ENCODE measurements at regions of chr7 and their contacts with region 1.

Region 1: GRCh38 chr7:94395141-94396036 is 694 bp downstream of the COL1A2 start:
- DNase-seq: peak; percentile 77
- ATAC-seq: peak; percentile 79
- H3K4me3 ChIP-seq: peak overlapping the region in 3 of 5 experiments; percentile 40 to 66 (median 50)
- H3K4me3 Mint-ChIP-seq: peak overlapping the region; percentile 75
- H3K27ac ChIP-seq: no peak overlapping the region
- H3K27ac Mint-ChIP-seq: no peak overlapping the region
- H3K4me1 ChIP-seq: peaks cover 15 to 16% of the 10 kb centered on the region in 2 donors
- H3K4me1 Mint-ChIP-seq: peaks cover 10% of the 10 kb centered on the region
- H3K27me3 ChIP-seq: peaks cover 0 to 29% (median 8%) of the 10 kb centered on the region in 4 experiments
- H3K27me3 Mint-ChIP-seq: peaks cover 37% of the 10 kb centered on the region
- CTCF ChIP-seq: peak; percentile 86

Region 2: GRCh38 chr7:93442478-93443224 is 952.7 kb before region 1 on chr7:
- CTCF ChIA-PET with region 1: interaction called, 10 read pairs
- POLR2A ChIA-PET with region 1: no interaction called
- intact Hi-C with region 1: loop called (anchors 5 kb)
- DNase-seq: peak; percentile 56
- ATAC-seq: peak; percentile 47
- H3K4me3 ChIP-seq: no peak overlapping the region
- H3K4me3 Mint-ChIP-seq: no peak overlapping the region
- H3K27ac ChIP-seq: no peak overlapping the region
- H3K27ac Mint-ChIP-seq: no peak overlapping the region
- H3K4me1 ChIP-seq: no peaks in the 10 kb centered on the region
- H3K4me1 Mint-ChIP-seq: no peaks in the 10 kb centered on the region
- H3K27me3 ChIP-seq: no peaks in the 10 kb centered on the region
- H3K27me3 Mint-ChIP-seq: peaks cover 6% of the 10 kb centered on the region
- CTCF ChIP-seq: peak; percentile 79

Region 3: GRCh38 chr7:93799750-93800357 is 595.5 kb before region 1 on chr7:
- CTCF ChIA-PET with region 1: interaction called, 4 read pairs
- POLR2A ChIA-PET with region 1: no interaction called
- intact Hi-C with region 1: loop called (anchors 5 kb)
- DNase-seq: peak; percentile 6
- ATAC-seq: no peak
- H3K4me3 ChIP-seq: no peak overlapping the region
- H3K4me3 Mint-ChIP-seq: no peak overlapping the region
- H3K27ac ChIP-seq: no peak overlapping the region
- H3K27ac Mint-ChIP-seq: no peak overlapping the region
- H3K4me1 ChIP-seq: no peaks in the 10 kb centered on the region
- H3K4me1 Mint-ChIP-seq: no peaks in the 10 kb centered on the region
- H3K27me3 ChIP-seq: no peaks in the 10 kb centered on the region
- H3K27me3 Mint-ChIP-seq: no peaks in the 10 kb centered on the region
- CTCF ChIP-seq: no peak

Region 4: DNA sequence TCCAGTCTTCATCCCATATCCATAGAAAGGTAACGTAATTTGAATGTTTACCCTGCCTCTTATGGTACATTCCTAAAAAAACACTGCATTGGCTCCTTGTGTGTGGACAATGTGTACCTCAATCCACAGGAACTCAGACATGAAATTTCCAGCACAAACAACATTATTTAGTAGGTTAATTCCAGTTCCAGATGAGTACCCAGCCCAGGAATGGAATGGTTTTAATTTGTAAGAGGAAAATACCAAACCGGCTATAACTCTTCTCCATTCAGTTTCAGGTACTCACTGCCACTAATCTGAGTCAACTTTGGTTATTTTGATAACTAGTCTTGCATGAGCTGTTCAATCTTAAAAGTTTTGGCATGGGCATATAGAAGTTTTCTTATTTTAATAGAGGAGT is 543.9 kb before region 1 on chr7:
- CTCF ChIA-PET with region 1: no interaction called
- POLR2A ChIA-PET with region 1: no interaction called
- intact Hi-C with region 1: no loop called
- DNase-seq: no peak
- ATAC-seq: no peak
- H3K4me3 ChIP-seq: no peak overlapping the region
- H3K4me3 Mint-ChIP-seq: no peak overlapping the region
- H3K27ac ChIP-seq: no peak overlapping the region
- H3K27ac Mint-ChIP-seq: no peak overlapping the region
- H3K4me1 ChIP-seq: no peaks in the 10 kb centered on the region
- H3K4me1 Mint-ChIP-seq: no peaks in the 10 kb centered on the region
- H3K27me3 ChIP-seq: peaks cover 0 to 3% (median 0%) of the 10 kb centered on the region in 4 experiments
- H3K27me3 Mint-ChIP-seq: peaks cover 29% of the 10 kb centered on the region
- CTCF ChIP-seq: no peak

Region 5: DNA sequence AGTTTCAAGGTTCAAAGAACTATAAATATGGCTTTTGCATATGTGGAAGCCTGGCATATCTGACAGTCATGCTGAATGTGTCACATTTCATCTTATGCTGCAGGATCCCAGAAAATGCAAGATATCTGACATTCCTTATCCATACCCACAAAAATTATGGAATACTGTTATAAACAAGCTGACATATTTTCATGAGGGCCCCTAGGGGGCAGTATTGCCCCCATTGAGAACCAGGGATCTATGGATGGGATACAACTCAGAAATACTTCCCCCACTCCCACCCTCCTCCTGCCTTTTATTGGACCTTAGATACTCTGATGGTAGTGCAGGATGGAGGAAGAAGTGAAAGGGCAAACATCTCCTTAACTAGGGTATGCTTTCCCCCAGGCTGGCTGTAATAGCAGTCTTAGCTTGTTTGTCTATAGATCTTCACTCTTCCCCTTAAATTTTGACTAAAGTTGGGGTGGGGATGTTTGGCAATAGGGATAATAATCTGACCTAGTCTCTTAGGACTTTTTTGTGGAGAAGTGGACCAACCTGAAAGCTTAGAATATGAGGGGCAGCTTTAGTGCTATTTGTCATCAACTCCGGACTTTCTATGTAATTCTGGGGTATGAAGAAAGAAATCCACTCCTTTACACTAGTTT is 492.5 kb before region 1 on chr7:
- CTCF ChIA-PET with region 1: interaction called, 21 read pairs
- POLR2A ChIA-PET with region 1: no interaction called
- intact Hi-C with region 1: no loop called
- DNase-seq: peak; percentile 66
- ATAC-seq: peak; percentile 41
- H3K4me3 ChIP-seq: no peak overlapping the region
- H3K4me3 Mint-ChIP-seq: no peak overlapping the region
- H3K27ac ChIP-seq: no peak overlapping the region
- H3K27ac Mint-ChIP-seq: no peak overlapping the region
- H3K4me1 ChIP-seq: no peaks in the 10 kb centered on the region
- H3K4me1 Mint-ChIP-seq: no peaks in the 10 kb centered on the region
- H3K27me3 ChIP-seq: no peaks in the 10 kb centered on the region
- H3K27me3 Mint-ChIP-seq: peaks cover 25% of the 10 kb centered on the region
- CTCF ChIP-seq: peak; percentile 80

Region 6: DNA sequence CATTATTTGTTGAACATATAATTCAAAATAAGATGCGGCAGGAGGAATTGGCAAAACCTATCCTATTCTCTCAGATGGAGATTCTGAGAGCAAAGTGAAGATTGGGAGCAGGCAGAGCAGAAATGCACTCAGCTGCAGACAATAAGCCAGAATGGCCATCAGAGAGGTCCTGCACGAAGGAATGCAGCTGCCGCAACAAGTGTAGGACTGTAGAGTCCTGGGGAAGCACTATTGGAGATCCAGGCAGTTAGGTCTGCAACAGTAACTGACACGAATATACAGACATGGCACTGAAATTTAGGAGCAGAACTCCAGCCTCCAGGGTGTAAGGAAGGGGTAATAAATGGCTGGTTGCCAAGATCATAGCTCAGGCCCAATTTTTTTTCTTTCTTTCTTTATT is 11.1 kb before region 1 on chr7:
- CTCF ChIA-PET with region 1: interaction called, 15 read pairs
- POLR2A ChIA-PET with region 1: no interaction called
- intact Hi-C with region 1: no loop called
- DNase-seq: no peak
- ATAC-seq: no peak
- H3K4me3 ChIP-seq: no peak overlapping the region
- H3K4me3 Mint-ChIP-seq: no peak overlapping the region
- H3K27ac ChIP-seq: no peak overlapping the region
- H3K27ac Mint-ChIP-seq: no peak overlapping the region
- H3K4me1 ChIP-seq: no peaks in the 10 kb centered on the region
- H3K4me1 Mint-ChIP-seq: no peaks in the 10 kb centered on the region
- H3K27me3 ChIP-seq: no peaks in the 10 kb centered on the region
- H3K27me3 Mint-ChIP-seq: peaks cover 3% of the 10 kb centered on the region
- CTCF ChIP-seq: no peak

Region 7: DNA sequence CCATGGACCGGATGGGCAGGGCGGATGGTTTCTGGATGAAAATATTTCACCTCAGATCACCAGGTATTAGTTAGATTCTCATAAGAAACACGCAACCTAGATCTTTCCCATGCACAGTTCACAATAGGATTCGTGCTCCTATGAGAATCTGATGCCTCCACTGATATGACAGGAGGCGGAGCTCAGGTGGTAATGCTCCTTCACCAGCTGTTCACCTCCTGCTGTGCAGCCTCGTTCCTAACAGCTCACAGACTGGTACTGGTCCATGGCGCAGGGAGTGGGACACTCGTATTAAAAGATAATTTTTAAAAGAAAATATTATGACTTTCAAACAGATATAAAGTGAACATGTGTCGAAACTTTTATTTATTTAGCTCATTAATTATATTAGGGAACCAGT is 107.7 kb after region 1 on chr7:
- CTCF ChIA-PET with region 1: no interaction called
- POLR2A ChIA-PET with region 1: no interaction called
- intact Hi-C with region 1: no loop called
- DNase-seq: no peak
- ATAC-seq: no peak
- H3K4me3 ChIP-seq: no peak overlapping the region
- H3K4me3 Mint-ChIP-seq: no peak overlapping the region
- H3K27ac ChIP-seq: no peak overlapping the region
- H3K27ac Mint-ChIP-seq: no peak overlapping the region
- H3K4me1 ChIP-seq: no peaks in the 10 kb centered on the region
- H3K4me1 Mint-ChIP-seq: no peaks in the 10 kb centered on the region
- H3K27me3 ChIP-seq: peaks cover 0 to 4% (median 0%) of the 10 kb centered on the region in 4 experiments
- H3K27me3 Mint-ChIP-seq: peaks cover 19% of the 10 kb centered on the region
- CTCF ChIP-seq: no peak

Measured in B cell (primary cell).